Cardiac septum (tissue), 1 donor: ENCODE measurements at regions of chr3 and their contacts with region 1.

Region 1: GRCh38 chr3:71130471-71131374 is 452.8 kb downstream of the FOXP1 start:
- DNase-seq: peak; percentile 86

Region 2: GRCh38 chr3:71006810-71007785 is 123.6 kb before region 1 on chr3:
- intact Hi-C with region 1: loop called (anchors 5 kb)
- DNase-seq: no peak

Region 3: DNA sequence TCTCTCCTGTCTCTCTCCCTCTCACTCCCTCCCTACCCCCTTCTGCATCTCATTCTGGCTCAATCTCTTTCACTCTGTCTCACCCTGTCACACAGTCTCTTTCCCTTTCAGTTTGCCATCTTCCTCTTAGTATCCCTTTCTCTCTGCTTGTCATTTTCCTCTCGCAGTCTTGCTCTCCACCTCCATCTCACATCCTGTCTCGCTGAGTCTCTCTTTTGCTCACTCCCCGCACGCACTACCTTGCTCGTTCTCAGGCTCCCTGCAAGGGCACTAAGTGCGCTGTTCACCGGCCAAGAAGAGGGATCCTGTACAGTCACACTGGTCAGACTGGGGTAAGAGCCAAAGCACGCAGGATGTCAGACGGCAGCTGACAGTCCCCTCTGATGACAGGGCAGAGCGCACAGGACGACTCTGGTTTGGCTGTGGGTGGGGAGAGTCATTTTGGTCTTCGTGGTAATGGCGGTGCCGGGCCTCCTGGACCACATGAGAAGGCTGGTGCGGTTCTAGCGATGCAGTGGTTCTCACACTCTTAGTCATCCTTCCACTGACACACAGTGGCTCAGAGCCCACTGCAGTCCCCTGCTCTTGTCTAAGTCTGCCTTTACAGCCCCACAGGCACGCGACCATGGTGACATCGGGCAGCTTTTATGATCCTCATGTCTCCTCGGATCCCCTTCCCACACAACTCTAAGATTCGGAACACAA is 96.0 kb after region 1 on chr3:
- intact Hi-C with region 1: loop called (anchors 5 kb)
- DNase-seq: peak; percentile 86

Region 4: GRCh38 chr3:71247221-71247976 is 116.7 kb after region 1 on chr3:
- intact Hi-C with region 1: loop called (anchors 5 kb)
- DNase-seq: no peak

Region 5: DNA sequence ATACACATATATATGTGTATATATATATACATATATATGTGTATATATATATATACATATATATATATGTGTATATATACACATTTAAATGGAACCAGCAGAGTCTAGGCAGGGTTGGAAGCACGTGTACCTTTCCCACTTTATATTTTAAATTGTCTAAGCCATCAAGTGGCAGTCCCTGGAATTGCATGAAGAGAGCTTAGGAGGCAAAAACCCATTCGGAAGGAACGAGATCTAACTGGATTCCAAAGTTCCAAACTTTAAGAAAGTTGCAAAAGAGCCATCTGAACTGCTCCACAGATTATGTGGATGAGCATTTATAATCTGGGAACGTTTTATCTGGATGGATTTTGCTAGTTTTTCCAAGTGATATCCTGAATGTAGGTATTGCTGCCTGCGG is 266.3 kb after region 1 on chr3:
- intact Hi-C with region 1: loop called (anchors 10 kb)
- DNase-seq: no peak